Thyroid gland (tissue), 4 donors: ENCODE measurements at regions of chr7 and their contacts with region 1.

Region 1: GRCh38 chr7:107743567-107744344 is at the start of gene CBLL1:
- DNase-seq: peak; percentile 98
- H3K4me3 ChIP-seq: peak within 1 kb of the TSS; percentile 72 to 95 (median 85)
- H3K27ac ChIP-seq: peak within 1 kb of the TSS; percentile 90 to 100 (median 98)
- H3K4me1 ChIP-seq: peaks cover 30 to 39% of the 10 kb centered on the region in 2 donors
- H3K27me3 ChIP-seq: no peaks in the 10 kb centered on the region
- CTCF ChIP-seq: peak in 5 of 6 experiments; percentile 54 to 80 (median 71)
- POLR2A ChIP-seq: peak in 1 of 2 donors; percentile 75
- total RNA-seq, gene CBLL1: 27.0 to 41.6 (median 33.5) TPM

Region 2: GRCh38 chr7:107879400-107880035 is 135.8 kb after region 1 on chr7:
- intact Hi-C with region 1: loop called (anchors 10 kb)
- DNase-seq: peak; percentile 34 to 39
- H3K4me3 ChIP-seq: no peak overlapping the region
- H3K27ac ChIP-seq: no peak overlapping the region
- H3K4me1 ChIP-seq: no peaks in the 10 kb centered on the region
- H3K27me3 ChIP-seq: no peaks in the 10 kb centered on the region
- CTCF ChIP-seq: peak in 5 of 6 experiments; percentile 32 to 77 (median 72)
- POLR2A ChIP-seq: no peak